ENCODE measurements at regions of chr3 and their contacts with region 1.

Region 1: DNA sequence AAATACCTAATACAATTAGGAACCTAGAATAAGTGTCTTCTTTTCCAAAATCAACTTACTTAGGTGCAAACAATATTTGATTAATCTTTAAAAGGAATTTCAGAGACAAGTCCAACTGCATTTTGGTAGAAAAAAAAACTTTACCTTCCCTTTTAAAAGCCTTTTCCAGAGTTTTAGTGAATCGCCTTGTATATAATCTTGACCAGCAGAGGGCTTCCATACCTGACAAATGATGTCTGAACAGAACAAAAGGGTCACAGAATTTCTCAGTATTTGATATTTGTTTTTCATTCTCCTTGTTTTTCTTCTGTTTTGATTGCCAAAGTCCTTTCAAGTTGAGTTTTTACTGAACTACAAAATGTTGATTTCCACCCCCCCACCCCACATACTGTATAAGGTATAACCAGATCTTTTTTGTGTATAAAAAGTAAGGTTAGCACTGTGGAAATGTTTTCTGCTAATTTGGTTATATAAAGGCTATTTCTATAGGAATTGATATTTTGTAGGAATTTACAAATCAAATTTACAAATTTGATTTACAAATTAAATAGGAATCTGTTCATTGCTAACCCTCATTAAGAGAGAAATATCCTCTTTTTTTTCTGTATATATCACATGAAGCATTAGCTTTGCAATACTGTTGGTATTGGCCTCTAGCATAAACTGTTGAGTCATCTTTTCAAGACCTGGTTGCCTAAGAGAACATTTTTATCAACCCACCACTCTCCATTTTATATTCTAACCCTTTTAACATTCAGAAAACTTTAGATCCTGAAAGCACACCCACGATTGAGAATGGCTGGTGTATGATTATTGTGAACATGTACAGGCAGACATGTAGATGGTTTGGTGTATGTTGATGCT is 464.1 kb upstream of the RARB start:
- DNase-seq: no peak
- ATAC-seq: peak in 1 of 8 donors; percentile 61
- H3K4me3 ChIP-seq: no peak overlapping the region
- H3K27ac ChIP-seq: no peak overlapping the region
- H3K4me1 ChIP-seq: no peaks in the 10 kb centered on the region
- H3K27me3 ChIP-seq: no peaks in the 10 kb centered on the region
- CTCF ChIP-seq: peak in 8 of 9 donors; percentile 44 to 71 (median 64)

Region 2: GRCh38 chr3:25021816-25022215 is 57.8 kb after region 1 on chr3:
- intact Hi-C with region 1: loop called in 2 of 10 experiments (anchors 10 kb)
- DNase-seq: no peak
- ATAC-seq: peak in 4 of 8 donors; percentile 44 to 61 (median 59)
- H3K4me3 ChIP-seq: no peak overlapping the region
- H3K27ac ChIP-seq: no peak overlapping the region
- H3K4me1 ChIP-seq: no peaks in the 10 kb centered on the region
- H3K27me3 ChIP-seq: no peaks in the 10 kb centered on the region
- CTCF ChIP-seq: peak in 8 of 9 donors; percentile 30 to 74 (median 62)

Measured in heart right ventricle (tissue), 16 donors.